ENCODE measurements at regions of chr12 and their contacts with region 1.

Region 1: GRCh38 chr12:52980693-52981423 is 25.4 kb upstream of the EIF4B start:
- DNase-seq: peak; percentile 53 to 85 (median 79)
- ATAC-seq: peak; percentile 98
- H3K4me3 ChIP-seq: no peak overlapping the region
- H3K4me3 Mint-ChIP-seq: no peak overlapping the region
- H3K27ac ChIP-seq: no peak overlapping the region
- H3K27ac Mint-ChIP-seq: peak overlapping the region in 1 of 9 donors; percentile 17
- H3K4me1 ChIP-seq: no peaks in the 10 kb centered on the region
- H3K4me1 Mint-ChIP-seq: peaks cover 0 to 7% (median 0%) of the 10 kb centered on the region in 7 donors
- H3K27me3 ChIP-seq: no peaks in the 10 kb centered on the region
- H3K27me3 Mint-ChIP-seq: peaks cover 23 to 44% (median 26%) of the 10 kb centered on the region in 5 donors

Region 2: GRCh38 chr12:52156736-52157565 is 823.9 kb before region 1 on chr12:
- CTCF ChIA-PET with region 1: interaction called, 3 read pairs
- POLR2A ChIA-PET with region 1: no interaction called
- intact Hi-C with region 1: loop called (anchors 1 to 5 kb)
- DNase-seq: peak; percentile 46 to 80 (median 64)
- ATAC-seq: peak; percentile 56
- H3K4me3 ChIP-seq: no peak overlapping the region
- H3K4me3 Mint-ChIP-seq: no peak overlapping the region
- H3K27ac ChIP-seq: no peak overlapping the region
- H3K27ac Mint-ChIP-seq: peak overlapping the region in 8 of 9 donors; percentile 41 to 97 (median 85)
- H3K4me1 ChIP-seq: peaks cover 25 to 27% of the 10 kb centered on the region in 2 donors
- H3K4me1 Mint-ChIP-seq: peaks cover 22 to 36% (median 34%) of the 10 kb centered on the region in 7 donors
- H3K27me3 ChIP-seq: no peaks in the 10 kb centered on the region
- H3K27me3 Mint-ChIP-seq: no peaks in the 10 kb centered on the region

Region 3: DNA sequence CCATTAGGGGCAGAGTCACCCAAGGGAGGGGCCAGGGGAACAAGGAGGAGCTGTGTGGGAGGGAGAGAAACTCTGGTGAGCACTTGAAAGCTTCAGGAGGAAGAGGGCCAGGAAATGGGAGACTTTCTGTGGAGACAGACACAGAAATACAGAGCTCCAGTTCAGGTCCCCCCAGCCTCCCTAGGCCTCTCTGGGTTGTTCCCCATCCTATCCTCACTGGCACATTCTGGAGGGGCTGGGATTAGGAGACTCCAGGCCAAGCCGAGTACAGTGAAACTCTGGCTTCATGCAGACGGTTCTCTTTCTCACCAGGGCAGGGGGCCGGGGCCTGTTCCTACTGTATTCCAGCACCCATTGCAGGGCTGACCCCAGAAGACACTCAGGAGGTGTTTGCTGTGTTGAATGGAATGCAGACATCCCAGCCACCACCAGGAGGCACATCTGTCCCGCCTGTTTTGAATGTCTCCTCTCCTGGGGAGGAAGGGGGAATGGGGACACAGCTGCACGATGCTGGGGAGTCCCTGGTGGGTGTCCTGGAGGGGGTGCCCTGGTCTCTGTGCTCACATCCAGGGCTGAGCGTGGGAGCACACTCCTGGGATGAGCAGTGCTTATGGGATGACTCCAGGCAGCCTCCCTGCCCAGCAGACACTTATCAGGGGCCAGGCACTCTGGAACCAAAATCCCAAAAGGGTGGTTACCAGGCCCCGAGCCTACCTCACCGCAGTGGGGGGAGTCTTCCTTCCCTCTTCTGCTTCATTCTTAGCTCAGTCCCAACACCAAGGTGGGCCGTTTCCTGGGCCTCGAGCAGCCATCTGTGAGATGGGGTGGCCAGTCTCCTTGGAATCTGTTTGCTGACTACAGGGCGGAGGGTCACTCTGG is 589.9 kb before region 1 on chr12:
- CTCF ChIA-PET with region 1: interaction called, 3 read pairs
- POLR2A ChIA-PET with region 1: no interaction called
- intact Hi-C with region 1: loop called in 1 of 2 experiments (anchors 1 kb)
- DNase-seq: peak in 1 of 9 donors; percentile 8
- ATAC-seq: no peak
- H3K4me3 ChIP-seq: no peak overlapping the region
- H3K4me3 Mint-ChIP-seq: no peak overlapping the region
- H3K27ac ChIP-seq: no peak overlapping the region
- H3K27ac Mint-ChIP-seq: no peak overlapping the region
- H3K4me1 ChIP-seq: no peaks in the 10 kb centered on the region
- H3K4me1 Mint-ChIP-seq: peaks cover 0 to 1% (median 0%) of the 10 kb centered on the region in 7 donors
- H3K27me3 ChIP-seq: no peaks in the 10 kb centered on the region
- H3K27me3 Mint-ChIP-seq: peaks cover 0 to 4% (median 0%) of the 10 kb centered on the region in 5 donors

Region 4: DNA sequence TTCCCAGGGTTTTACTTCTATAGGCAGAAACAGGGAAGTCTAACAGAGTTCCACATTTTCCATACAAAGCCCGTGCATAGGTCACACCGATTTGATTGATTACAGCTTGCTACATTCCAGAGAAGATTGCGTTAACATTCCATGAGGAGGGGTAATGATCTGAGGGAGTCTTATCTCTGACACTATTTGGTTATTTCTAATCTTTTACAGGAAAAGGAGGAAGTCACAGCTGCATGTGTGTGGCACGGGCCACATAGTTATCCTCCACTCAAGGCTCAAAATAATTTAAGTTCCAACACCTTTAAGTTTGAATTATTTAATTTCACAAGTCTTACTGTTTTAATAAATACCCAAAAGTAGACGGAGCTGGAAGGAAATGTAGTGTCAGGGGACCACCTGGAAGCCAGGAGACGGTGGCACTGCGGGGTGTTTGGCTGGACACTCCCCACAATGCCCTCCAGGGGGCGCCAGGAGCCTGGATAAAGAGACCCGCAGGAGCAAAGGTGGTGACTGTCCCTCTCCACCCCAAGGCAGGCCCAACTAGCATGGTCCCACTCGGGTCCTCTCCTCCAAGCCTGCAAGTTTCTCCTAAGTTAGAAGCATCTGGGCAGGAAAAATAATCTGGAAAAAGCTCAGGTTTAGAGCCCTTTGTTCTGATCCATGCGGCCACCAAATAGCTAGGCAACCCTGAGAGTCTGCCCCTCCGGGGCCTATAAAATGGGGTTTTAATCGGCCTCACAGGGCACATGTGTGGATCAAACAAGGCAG is 96.1 kb before region 1 on chr12:
- CTCF ChIA-PET with region 1: interaction called, 297 read pairs
- POLR2A ChIA-PET with region 1: interaction called, 18 read pairs
- intact Hi-C with region 1: loop called (anchors 1 kb)
- DNase-seq: peak; percentile 59 to 85 (median 76)
- ATAC-seq: peak; percentile 87
- H3K4me3 ChIP-seq: no peak overlapping the region
- H3K4me3 Mint-ChIP-seq: no peak overlapping the region
- H3K27ac ChIP-seq: no peak overlapping the region
- H3K27ac Mint-ChIP-seq: no peak overlapping the region
- H3K4me1 ChIP-seq: peaks cover 5 to 6% of the 10 kb centered on the region in 2 donors
- H3K4me1 Mint-ChIP-seq: peaks cover 0 to 7% (median 5%) of the 10 kb centered on the region in 7 donors
- H3K27me3 ChIP-seq: peaks cover 0 to 3% of the 10 kb centered on the region in 2 donors
- H3K27me3 Mint-ChIP-seq: peaks cover 0 to 22% (median 8%) of the 10 kb centered on the region in 5 donors

Region 5: GRCh38 chr12:52903285-52903854 is 77.5 kb before region 1 on chr12:
- CTCF ChIA-PET with region 1: interaction called, 16 read pairs
- POLR2A ChIA-PET with region 1: no interaction called
- intact Hi-C with region 1: no loop called
- DNase-seq: peak; percentile 25 to 72 (median 60)
- ATAC-seq: peak; percentile 86
- H3K4me3 ChIP-seq: peak overlapping the region; percentile 56
- H3K4me3 Mint-ChIP-seq: peak overlapping the region in 9 of 10 donors; percentile 36 to 85 (median 68)
- H3K27ac ChIP-seq: peak overlapping the region; percentile 39
- H3K27ac Mint-ChIP-seq: peak overlapping the region in 6 of 9 donors; percentile 11 to 49 (median 36)
- H3K4me1 ChIP-seq: peaks cover 0 to 3% of the 10 kb centered on the region in 2 donors
- H3K4me1 Mint-ChIP-seq: peaks cover 3 to 16% (median 5%) of the 10 kb centered on the region in 7 donors
- H3K27me3 ChIP-seq: no peaks in the 10 kb centered on the region
- H3K27me3 Mint-ChIP-seq: peaks cover 0 to 13% (median 0%) of the 10 kb centered on the region in 5 donors